A549 (cell line): ENCODE measurements at regions of chr15 and their contacts with region 1.

Region 1: GRCh38 chr15:31488426-31489204 is 162.0 kb downstream of the KLF13 start:
- DNase-seq: peak; percentile 91 to 97
- ATAC-seq: peak; percentile 82 to 93
- H3K4me3 ChIP-seq: no peak overlapping the region
- H3K27ac ChIP-seq: peak overlapping the region; percentile 63 to 67
- H3K4me1 ChIP-seq: peaks cover 25% of the 10 kb centered on the region
- CTCF ChIP-seq: peak; percentile 95
- EP300 ChIP-seq: no peak
- POLR2A ChIP-seq: no peak
- RAD21 ChIP-seq: peak; percentile 92 to 97

Region 2: GRCh38 chr15:31128919-31129768 is 359.5 kb before region 1 on chr15:
- CTCF ChIA-PET with region 1: interaction called, 30 read pairs
- POLR2A ChIA-PET with region 1: no interaction called
- DNase-seq: peak; percentile 55 to 62
- ATAC-seq: peak; percentile 90 to 94
- H3K4me3 ChIP-seq: peak overlapping the region; percentile 22; the same call in 1 of the 3 replicates
- H3K27ac ChIP-seq: no peak overlapping the region
- H3K4me1 ChIP-seq: 0 out of 3 replicates have a peak, but pooled peaks cover 3% of the 10 kb centered on the region
- CTCF ChIP-seq: peak; percentile 97
- EP300 ChIP-seq: no peak
- POLR2A ChIP-seq: no peak
- RAD21 ChIP-seq: peak; percentile 96 to 97

Region 3: DNA sequence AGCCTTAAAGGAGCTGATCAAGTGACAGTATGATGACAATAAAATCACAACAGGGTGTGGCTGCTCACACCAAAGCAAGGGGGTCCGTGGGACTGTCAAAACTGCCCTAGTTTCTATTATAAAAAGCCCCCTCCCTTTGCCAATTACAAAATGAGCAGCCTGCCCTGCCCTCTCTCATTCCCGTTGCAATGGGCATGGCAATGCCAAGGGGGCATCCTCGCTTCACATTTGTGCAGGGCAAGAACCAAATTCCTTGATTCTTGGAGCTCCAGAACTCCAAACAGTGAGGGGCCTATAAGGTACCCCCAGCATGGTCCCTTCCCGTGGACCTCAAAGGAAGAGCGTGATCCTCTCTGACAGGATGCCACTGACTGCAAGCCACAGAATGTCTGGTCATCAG is 282.2 kb before region 1 on chr15:
- CTCF ChIA-PET with region 1: interaction called, 90 read pairs
- POLR2A ChIA-PET with region 1: no interaction called
- DNase-seq: no peak
- ATAC-seq: peak; percentile 19 to 43; a peak in 2 of 6 replicates
- H3K4me3 ChIP-seq: no peak overlapping the region
- H3K27ac ChIP-seq: no peak overlapping the region
- H3K4me1 ChIP-seq: no peaks in the 10 kb centered on the region
- CTCF ChIP-seq: 0 out of 3 replicates have a peak, but pooled peaks have one; percentile 12
- EP300 ChIP-seq: no peak
- POLR2A ChIP-seq: no peak
- RAD21 ChIP-seq: peak; percentile 45 to 46; a peak in 4 of 5 replicates

Region 4: GRCh38 chr15:31365655-31366127 is 122.9 kb before region 1 on chr15:
- CTCF ChIA-PET with region 1: interaction called, 11 read pairs
- POLR2A ChIA-PET with region 1: no interaction called
- DNase-seq: no peak
- ATAC-seq: peak in 1 of 2 experiments; percentile 61; a peak in 3 of 6 replicates
- H3K4me3 ChIP-seq: no peak overlapping the region
- H3K27ac ChIP-seq: peak overlapping the region in 1 of 2 experiments; percentile 23; a peak in 1 of 6 replicates
- H3K4me1 ChIP-seq: peaks cover 16% of the 10 kb centered on the region; the same call in 2 of the 3 replicates
- CTCF ChIP-seq: no peak
- EP300 ChIP-seq: no peak
- POLR2A ChIP-seq: no peak
- RAD21 ChIP-seq: no peak

Region 5: GRCh38 chr15:31405200-31405920 is 83.3 kb before region 1 on chr15:
- CTCF ChIA-PET with region 1: interaction called, 11 read pairs
- POLR2A ChIA-PET with region 1: no interaction called
- DNase-seq: peak in 1 of 2 experiments; percentile 37
- ATAC-seq: no peak
- H3K4me3 ChIP-seq: no peak overlapping the region
- H3K27ac ChIP-seq: no peak overlapping the region
- H3K4me1 ChIP-seq: peaks cover 7% of the 10 kb centered on the region; the same call in 1 of the 3 replicates
- CTCF ChIP-seq: no peak
- EP300 ChIP-seq: no peak
- POLR2A ChIP-seq: no peak
- RAD21 ChIP-seq: no peak

Region 6: GRCh38 chr15:31435261-31435911 is 53.2 kb before region 1 on chr15:
- CTCF ChIA-PET with region 1: interaction called, 254 read pairs
- POLR2A ChIA-PET with region 1: interaction called, 7 read pairs
- DNase-seq: peak; percentile 83 to 89
- ATAC-seq: peak; percentile 80 to 88
- H3K4me3 ChIP-seq: peak overlapping the region; percentile 12; the same call in 1 of the 3 replicates
- H3K27ac ChIP-seq: peak overlapping the region; percentile 57 to 74; a peak in 5 of 6 replicates
- H3K4me1 ChIP-seq: peaks cover 13% of the 10 kb centered on the region
- CTCF ChIP-seq: peak; percentile 94
- EP300 ChIP-seq: no peak
- POLR2A ChIP-seq: no peak
- RAD21 ChIP-seq: peak; percentile 91 to 93

Region 7: DNA sequence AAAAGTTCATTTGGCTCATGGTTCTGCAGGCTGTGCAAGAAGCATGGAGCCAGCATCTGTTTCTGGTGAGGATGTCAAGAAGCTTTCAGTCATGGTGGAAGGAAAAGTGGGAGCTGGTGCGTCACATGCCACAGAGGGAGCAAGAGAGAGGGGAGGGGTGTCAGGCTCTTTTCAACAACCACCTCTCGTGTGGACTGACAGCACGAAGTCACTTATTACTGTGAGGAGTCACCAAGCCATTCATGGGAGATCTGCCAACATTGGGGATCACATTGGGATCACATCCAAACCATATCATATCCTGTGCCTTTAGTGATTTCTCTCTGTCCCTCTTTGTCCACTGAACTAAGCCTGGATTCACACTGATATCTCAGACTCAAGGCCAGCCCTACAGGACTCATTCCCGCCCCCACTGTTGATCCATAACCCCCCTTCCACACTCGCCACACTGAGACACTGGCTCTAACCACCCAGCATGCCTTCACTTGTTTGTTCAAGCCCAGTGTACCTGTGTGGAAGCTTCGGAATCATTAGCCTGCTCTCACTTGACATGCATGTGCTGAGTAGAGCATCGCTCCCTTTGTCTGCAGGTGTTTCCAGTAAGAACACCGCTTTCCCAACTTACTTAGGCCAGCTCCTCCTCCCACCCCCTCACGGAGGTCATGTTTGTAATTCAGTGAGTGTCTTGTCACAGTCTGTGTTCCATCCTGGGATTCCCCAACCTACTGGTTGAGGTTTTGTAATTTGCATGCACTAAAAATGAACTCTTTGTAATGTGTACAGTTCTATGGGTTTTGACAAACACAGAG is 29.8 kb before region 1 on chr15:
- CTCF ChIA-PET with region 1: interaction called, 53 read pairs
- POLR2A ChIA-PET with region 1: no interaction called
- DNase-seq: no peak
- ATAC-seq: no peak
- H3K4me3 ChIP-seq: no peak overlapping the region
- H3K27ac ChIP-seq: peak overlapping the region; percentile 68 to 73; a peak in 4 of 6 replicates
- H3K4me1 ChIP-seq: peaks cover 35% of the 10 kb centered on the region
- CTCF ChIP-seq: no peak
- EP300 ChIP-seq: no peak
- POLR2A ChIP-seq: no peak
- RAD21 ChIP-seq: no peak